ENCODE measurements at regions of chr7 and their contacts with region 1.

Region 1: GRCh38 chr7:945556-946255 is 8.8 kb downstream of the ADAP1 start:
- DNase-seq: peak; percentile 100
- H3K4me3 Mint-ChIP-seq: peak overlapping the region; percentile 65
- H3K27ac Mint-ChIP-seq: peak overlapping the region; percentile 97
- H3K4me1 Mint-ChIP-seq: peaks cover 70% of the 10 kb centered on the region
- H3K27me3 Mint-ChIP-seq: no peaks in the 10 kb centered on the region
- CTCF ChIP-seq: no peak

Region 2: DNA sequence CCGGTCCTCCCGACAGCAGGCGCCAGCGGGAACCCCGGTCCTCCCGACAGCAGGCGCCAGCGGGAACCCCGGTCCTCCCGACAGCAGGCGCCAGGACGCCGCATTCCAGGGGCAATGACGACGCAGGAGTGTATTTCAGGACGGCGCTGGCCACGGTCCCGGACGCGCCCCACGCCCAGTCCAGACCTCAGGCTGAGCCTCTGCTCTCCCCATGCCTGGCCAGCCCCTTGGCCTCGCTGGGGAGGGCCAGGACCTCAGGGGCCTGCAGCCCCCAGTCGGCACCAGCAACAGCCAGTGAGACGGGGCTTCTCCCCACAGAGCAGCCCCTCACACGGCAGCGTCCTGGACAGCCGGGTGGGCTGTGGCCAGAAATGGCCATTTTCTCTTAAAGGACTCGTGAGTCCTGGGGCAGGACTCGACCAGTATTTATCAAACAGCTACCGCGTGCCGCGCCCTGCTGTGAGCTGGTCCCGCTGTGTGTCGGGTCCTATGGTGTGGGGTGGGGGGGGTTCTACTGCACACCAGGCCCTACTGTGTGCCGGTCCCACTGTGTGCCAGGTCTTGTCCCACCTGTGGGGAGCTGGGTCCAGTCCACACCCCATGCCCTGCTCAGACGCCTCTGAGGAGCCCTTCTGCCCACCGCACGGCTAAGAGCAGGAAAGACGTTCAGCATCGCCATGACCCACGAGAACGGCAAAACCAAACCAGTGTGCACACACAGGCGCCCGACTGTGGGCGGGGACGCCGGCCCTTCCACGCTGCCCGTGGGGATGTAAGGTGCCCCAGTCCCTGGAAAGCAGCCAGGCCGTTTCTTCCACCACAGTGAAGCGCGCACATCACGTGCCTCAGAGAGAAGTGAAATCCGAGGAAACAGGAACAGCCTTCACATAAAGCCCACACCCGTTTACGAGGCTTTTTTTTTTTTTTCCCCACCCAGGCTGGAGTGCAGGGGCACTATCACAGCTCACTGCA is 36.1 kb before region 1 on chr7:
- CTCF ChIA-PET with region 1: interaction called, 10 read pairs
- intact Hi-C with region 1: loop called (anchors 5 kb)
- DNase-seq: no peak
- H3K4me3 Mint-ChIP-seq: no peak overlapping the region
- H3K27ac Mint-ChIP-seq: no peak overlapping the region
- H3K4me1 Mint-ChIP-seq: peaks cover 32% of the 10 kb centered on the region
- H3K27me3 Mint-ChIP-seq: peaks cover 20% of the 10 kb centered on the region
- CTCF ChIP-seq: no peak

Region 3: GRCh38 chr7:923108-924041 is 22.3 kb before region 1 on chr7:
- CTCF ChIA-PET with region 1: interaction called, 17 read pairs
- intact Hi-C with region 1: loop called (anchors 1 kb)
- DNase-seq: peak; percentile 92
- H3K4me3 Mint-ChIP-seq: peak overlapping the region; percentile 45
- H3K27ac Mint-ChIP-seq: peak overlapping the region; percentile 85
- H3K4me1 Mint-ChIP-seq: peaks cover 75% of the 10 kb centered on the region
- H3K27me3 Mint-ChIP-seq: no peaks in the 10 kb centered on the region
- CTCF ChIP-seq: no peak

Region 4: GRCh38 chr7:929311-929711 is 16.4 kb before region 1 on chr7:
- CTCF ChIA-PET with region 1: interaction called, 17 read pairs
- intact Hi-C with region 1: loop called (anchors 1 kb)
- DNase-seq: no peak
- H3K4me3 Mint-ChIP-seq: peak overlapping the region; percentile 53
- H3K27ac Mint-ChIP-seq: peak overlapping the region; percentile 96
- H3K4me1 Mint-ChIP-seq: peaks cover 55% of the 10 kb centered on the region
- H3K27me3 Mint-ChIP-seq: no peaks in the 10 kb centered on the region
- CTCF ChIP-seq: no peak

Region 5: GRCh38 chr7:960269-960871 is 14.7 kb after region 1 on chr7:
- CTCF ChIA-PET with region 1: no interaction called
- intact Hi-C with region 1: no loop called
- DNase-seq: no peak
- H3K4me3 Mint-ChIP-seq: no peak overlapping the region
- H3K27ac Mint-ChIP-seq: no peak overlapping the region
- H3K4me1 Mint-ChIP-seq: peaks cover 5% of the 10 kb centered on the region
- H3K27me3 Mint-ChIP-seq: no peaks in the 10 kb centered on the region
- CTCF ChIP-seq: no peak